CD4-positive, alpha-beta memory T cell (primary cell): ENCODE measurements at regions of chr12 and their contacts with region 1.

Region 1: GRCh38 chr12:110280779-110281548 is at the start of gene ATP2A2:
- DNase-seq: peak; percentile 89 to 93 (median 92)
- H3K4me3 ChIP-seq: peak within 1 kb of the TSS; percentile 87 to 88
- H3K4me3 Mint-ChIP-seq: peak within 1 kb of the TSS; percentile 91 to 98 (median 94)
- H3K27ac ChIP-seq: peak within 1 kb of the TSS; percentile 85
- H3K27ac Mint-ChIP-seq: peak within 1 kb of the TSS; percentile 90 to 98 (median 94)
- H3K4me1 ChIP-seq: peaks cover 47% of the 10 kb centered on the region
- H3K4me1 Mint-ChIP-seq: peaks cover 36 to 53% (median 43%) of the 10 kb centered on the region in 4 donors
- H3K27me3 ChIP-seq: no peaks in the 10 kb centered on the region
- H3K27me3 Mint-ChIP-seq: no peaks in the 10 kb centered on the region
- total RNA-seq, gene ATP2A2: 90.4 to 91.0 TPM

Region 2: DNA sequence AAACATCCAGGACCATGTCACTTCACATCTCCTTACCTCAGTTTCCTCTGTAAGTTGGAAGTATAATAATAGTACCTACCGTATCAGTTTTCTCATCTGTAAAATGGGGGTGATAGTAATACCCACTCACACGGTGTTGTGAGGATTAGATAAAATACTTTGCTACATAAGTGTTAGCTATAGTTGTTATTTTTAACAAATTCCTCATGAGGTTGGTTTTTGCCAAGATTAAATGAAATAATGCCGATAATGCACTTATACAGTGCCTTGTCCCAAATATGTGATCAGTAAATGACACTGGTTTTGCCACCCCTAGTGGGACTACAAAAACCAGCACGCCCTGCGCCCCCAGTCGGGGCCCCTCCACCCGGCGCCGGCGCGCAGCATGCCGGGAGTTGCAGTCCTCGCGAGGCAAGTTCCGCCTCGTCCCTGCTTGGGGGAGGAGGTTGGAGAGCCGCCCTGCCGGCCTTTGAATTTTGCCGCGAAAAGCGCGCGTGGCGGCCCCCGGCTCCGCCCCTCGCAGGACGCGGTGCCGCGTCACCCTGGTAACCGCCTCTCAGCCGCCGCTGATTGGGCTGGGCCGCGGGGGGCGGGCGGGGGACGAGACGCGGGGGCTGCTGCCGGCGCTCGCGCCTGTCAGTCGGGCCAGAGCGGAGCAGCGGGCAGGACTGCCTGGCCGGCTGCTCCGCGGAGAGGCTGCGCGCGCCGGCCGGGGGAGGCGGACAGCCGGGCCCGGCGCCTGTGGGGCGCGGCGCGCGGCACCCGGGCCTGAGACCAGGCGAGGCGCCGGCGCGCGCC is 567.6 kb before region 1 on chr12 and contains the start of gene FAM222A:
- CTCF ChIA-PET with region 1: no interaction called
- POLR2A ChIA-PET with region 1: no interaction called
- intact Hi-C with region 1: loop called (anchors 1 kb)
- DNase-seq: peak; percentile 97 to 98 (median 98)
- H3K4me3 ChIP-seq: peak within 1 kb of the TSS in 1 of 2 donors; percentile 60
- H3K4me3 Mint-ChIP-seq: peak within 1 kb of the TSS; percentile 27 to 84 (median 72)
- H3K27ac ChIP-seq: peak within 1 kb of the TSS; percentile 30
- H3K27ac Mint-ChIP-seq: peak within 1 kb of the TSS in 4 of 7 donors; percentile 6 to 66 (median 43)
- H3K4me1 ChIP-seq: peaks cover 12% of the 10 kb centered on the region
- H3K4me1 Mint-ChIP-seq: peaks cover 0 to 6% (median 1%) of the 10 kb centered on the region in 4 donors
- H3K27me3 ChIP-seq: peaks cover 18% of the 10 kb centered on the region
- H3K27me3 Mint-ChIP-seq: peaks cover 13 to 18% of the 10 kb centered on the region in 2 donors
- total RNA-seq, gene FAM222A: 0.55 to 0.69 TPM

Region 3: GRCh38 chr12:110124184-110124995 is 156.6 kb before region 1 on chr12 and contains the start of gene IFT81:
- CTCF ChIA-PET with region 1: no interaction called
- POLR2A ChIA-PET with region 1: interaction called, 27 read pairs
- intact Hi-C with region 1: loop called (anchors 1 kb)
- DNase-seq: peak; percentile 92 to 95 (median 93)
- H3K4me3 ChIP-seq: peak within 1 kb of the TSS; percentile 70 to 89
- H3K4me3 Mint-ChIP-seq: peak within 1 kb of the TSS; percentile 91 to 96 (median 94)
- H3K27ac ChIP-seq: peak within 1 kb of the TSS; percentile 72
- H3K27ac Mint-ChIP-seq: peak within 1 kb of the TSS; percentile 76 to 97 (median 95)
- H3K4me1 ChIP-seq: peaks cover 10% of the 10 kb centered on the region
- H3K4me1 Mint-ChIP-seq: peaks cover 3 to 15% (median 8%) of the 10 kb centered on the region in 4 donors
- H3K27me3 ChIP-seq: no peaks in the 10 kb centered on the region
- H3K27me3 Mint-ChIP-seq: peaks cover 5 to 10% of the 10 kb centered on the region in 2 donors
- total RNA-seq, gene IFT81: 1.1 to 1.3 TPM

Region 4: DNA sequence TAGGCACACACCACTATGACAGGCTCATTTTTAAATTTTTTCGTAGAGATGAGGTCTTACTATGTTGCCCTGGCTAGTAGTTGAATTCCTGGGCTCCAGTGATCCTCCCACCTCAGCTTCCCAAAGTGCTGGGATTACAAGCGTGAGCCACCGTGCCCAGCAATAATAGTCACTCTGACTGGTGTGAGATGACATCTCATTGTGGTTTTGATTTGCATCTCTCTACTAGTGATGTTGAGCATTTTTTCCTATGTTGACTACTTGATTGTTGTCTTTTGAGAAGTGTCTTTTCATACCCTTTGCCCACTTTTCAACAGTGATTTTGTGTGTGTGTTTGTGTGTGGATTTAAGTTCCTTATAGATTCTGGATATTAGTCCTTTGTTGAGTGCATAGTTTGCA is 26.4 kb after region 1 on chr12:
- CTCF ChIA-PET with region 1: interaction called, 6 read pairs
- POLR2A ChIA-PET with region 1: interaction called, 14 read pairs
- intact Hi-C with region 1: no loop called
- DNase-seq: no peak
- H3K4me3 ChIP-seq: no peak overlapping the region
- H3K4me3 Mint-ChIP-seq: peak overlapping the region in 5 of 8 donors; percentile 27 to 61 (median 47)
- H3K27ac ChIP-seq: no peak overlapping the region
- H3K27ac Mint-ChIP-seq: peak overlapping the region; percentile 32 to 87 (median 59)
- H3K4me1 ChIP-seq: peaks cover 66% of the 10 kb centered on the region
- H3K4me1 Mint-ChIP-seq: peaks cover 45 to 77% (median 60%) of the 10 kb centered on the region in 4 donors
- H3K27me3 ChIP-seq: no peaks in the 10 kb centered on the region
- H3K27me3 Mint-ChIP-seq: no peaks in the 10 kb centered on the region

Region 5: DNA sequence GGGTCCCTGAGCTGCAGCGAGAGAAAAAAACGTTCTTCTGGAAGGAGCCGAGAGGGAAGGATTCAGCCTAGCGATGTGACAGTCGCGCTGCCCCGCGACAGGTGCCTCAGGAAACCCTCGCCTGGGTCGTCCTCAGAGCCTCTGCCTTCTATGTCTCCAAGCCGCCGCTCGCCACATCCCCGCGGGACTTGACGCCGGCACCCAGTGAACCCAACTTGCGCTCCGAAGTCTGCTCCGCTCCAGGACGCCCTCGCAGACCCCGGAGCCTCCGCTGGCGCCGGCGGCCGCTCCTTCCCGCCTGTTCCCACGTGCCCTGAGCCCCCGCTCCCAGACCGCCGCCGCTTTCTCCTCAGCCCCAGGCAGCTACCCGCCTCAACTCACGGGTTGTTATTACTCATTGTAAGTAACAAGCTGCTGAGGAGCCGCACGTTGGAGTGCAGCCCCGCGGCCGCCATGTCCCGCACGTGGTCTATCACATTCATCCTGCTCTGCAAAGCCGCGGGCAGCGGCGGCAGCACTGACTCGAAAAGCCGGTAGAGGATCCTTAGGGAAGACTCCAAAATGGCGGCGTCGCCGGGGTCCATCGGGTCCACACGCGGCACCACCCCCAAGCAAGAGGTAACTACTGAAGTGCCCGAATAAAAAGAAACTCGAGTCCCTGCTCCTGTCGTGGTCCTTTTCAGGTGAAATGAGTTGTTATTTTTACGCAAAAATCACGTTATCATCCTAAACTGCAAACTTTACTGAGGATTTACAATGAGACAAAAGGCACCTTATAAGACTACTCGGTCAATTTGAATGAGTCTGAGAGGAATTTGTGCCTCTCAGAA is 122.4 kb after region 1 on chr12 and contains the start of gene ANAPC7:
- CTCF ChIA-PET with region 1: no interaction called
- POLR2A ChIA-PET with region 1: interaction called, 3 read pairs
- intact Hi-C with region 1: loop called (anchors 1 kb)
- DNase-seq: peak; percentile 88 to 90 (median 89)
- H3K4me3 ChIP-seq: peak within 1 kb of the TSS; percentile 80 to 93
- H3K4me3 Mint-ChIP-seq: peak within 1 kb of the TSS; percentile 98 to 100 (median 100)
- H3K27ac ChIP-seq: peak within 1 kb of the TSS; percentile 82
- H3K27ac Mint-ChIP-seq: peak within 1 kb of the TSS in 6 of 7 donors; percentile 98 to 99 (median 99)
- H3K4me1 ChIP-seq: peaks cover 32% of the 10 kb centered on the region
- H3K4me1 Mint-ChIP-seq: peaks cover 18 to 44% (median 30%) of the 10 kb centered on the region in 4 donors
- H3K27me3 ChIP-seq: no peaks in the 10 kb centered on the region
- H3K27me3 Mint-ChIP-seq: no peaks in the 10 kb centered on the region
- total RNA-seq, gene ANAPC7: 69.9 to 70.1 TPM

Region 6: GRCh38 chr12:110501752-110502738 is 221.1 kb after region 1 on chr12 and contains the starts of genes RAD9B and VPS29:
- CTCF ChIA-PET with region 1: no interaction called
- POLR2A ChIA-PET with region 1: interaction called, 5 read pairs
- intact Hi-C with region 1: loop called (anchors 2 kb)
- DNase-seq: peak; percentile 99 to 100 (median 99)
- H3K4me3 ChIP-seq: peak within 1 kb of the TSS; percentile 85 to 91
- H3K4me3 Mint-ChIP-seq: peak within 1 kb of the TSS; percentile 96 to 99 (median 98)
- H3K27ac ChIP-seq: peak within 1 kb of the TSS; percentile 94
- H3K27ac Mint-ChIP-seq: peak within 1 kb of the TSS; percentile 95 to 99 (median 97)
- H3K4me1 ChIP-seq: peaks cover 35% of the 10 kb centered on the region
- H3K4me1 Mint-ChIP-seq: peaks cover 20 to 44% (median 30%) of the 10 kb centered on the region in 4 donors
- H3K27me3 ChIP-seq: no peaks in the 10 kb centered on the region
- H3K27me3 Mint-ChIP-seq: no peaks in the 10 kb centered on the region
- total RNA-seq, gene RAD9B: 1.1 to 2.1 TPM
- total RNA-seq, gene VPS29: 117 to 121 TPM